Esophagus squamous epithelium (tissue), 5 donors: ENCODE measurements at regions of chr6 and their contacts with region 1.

Region 1: DNA sequence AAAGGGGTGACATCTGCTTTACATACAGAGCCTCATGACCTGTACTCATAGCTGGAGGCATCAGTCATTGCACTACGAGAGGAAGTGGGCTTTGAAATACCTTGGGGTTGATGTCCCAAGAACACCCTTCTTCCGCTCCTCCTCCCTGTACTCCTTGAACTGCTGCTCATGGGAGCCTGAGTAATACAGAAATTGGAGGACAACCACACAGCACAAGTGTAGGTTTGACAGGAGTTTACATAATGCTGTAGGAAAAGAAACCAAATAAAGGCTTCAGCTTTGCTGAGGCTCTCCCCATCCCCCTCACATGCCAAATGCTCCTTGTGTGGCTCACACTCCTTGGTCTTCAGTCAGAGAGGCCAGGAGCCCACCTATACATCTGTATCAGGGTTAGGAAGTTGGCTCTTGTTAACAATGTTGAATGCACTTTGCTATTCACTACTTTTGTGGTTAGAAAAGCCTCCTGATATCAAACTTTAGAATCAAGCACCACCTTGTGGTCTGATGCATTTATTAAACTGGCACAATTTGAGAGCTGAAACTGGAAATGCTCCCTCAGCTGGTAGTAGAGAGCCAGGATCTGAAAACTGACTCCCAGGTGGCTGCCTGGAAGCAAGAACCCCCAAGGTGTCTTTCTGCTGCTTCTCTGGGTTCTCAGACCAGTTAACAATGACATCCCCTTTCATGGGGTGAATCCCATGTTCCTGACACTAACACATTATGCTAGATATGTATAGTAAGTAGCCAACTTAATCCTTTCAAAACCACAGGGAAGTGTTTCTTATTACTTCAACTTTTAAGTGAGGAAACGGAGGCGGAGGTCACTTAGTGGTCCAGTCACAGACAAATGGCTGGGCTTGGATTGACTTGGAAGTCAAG is 56.2 kb upstream of the EDN1 start:
- DNase-seq: no peak
- H3K4me3 ChIP-seq: no peak overlapping the region
- H3K27ac ChIP-seq: no peak overlapping the region
- H3K4me1 ChIP-seq: peaks cover 0 to 22% (median 3%) of the 10 kb centered on the region in 3 donors
- H3K27me3 ChIP-seq: no peaks in the 10 kb centered on the region
- CTCF ChIP-seq: peak; percentile 62 to 90 (median 84)
- POLR2A ChIP-seq: no peak

Region 2: GRCh38 chr6:11585426-11586016 is 648.4 kb before region 1 on chr6:
- intact Hi-C with region 1: loop called (anchors 10 kb)
- DNase-seq: no peak
- H3K4me3 ChIP-seq: no peak overlapping the region
- H3K27ac ChIP-seq: no peak overlapping the region
- H3K4me1 ChIP-seq: peaks cover 0 to 8% (median 6%) of the 10 kb centered on the region in 3 donors
- H3K27me3 ChIP-seq: no peaks in the 10 kb centered on the region
- CTCF ChIP-seq: peak; percentile 29 to 70 (median 56)
- POLR2A ChIP-seq: no peak

Region 3: GRCh38 chr6:11654876-11655275 is 579.1 kb before region 1 on chr6:
- intact Hi-C with region 1: loop called (anchors 5 kb)
- DNase-seq: no peak
- H3K4me3 ChIP-seq: no peak overlapping the region
- H3K27ac ChIP-seq: peak overlapping the region in 1 of 4 donors; percentile 11
- H3K4me1 ChIP-seq: peaks cover 4 to 36% (median 13%) of the 10 kb centered on the region in 3 donors
- H3K27me3 ChIP-seq: no peaks in the 10 kb centered on the region
- CTCF ChIP-seq: no peak
- POLR2A ChIP-seq: no peak

Region 4: GRCh38 chr6:12065321-12066140 is 168.4 kb before region 1 on chr6:
- intact Hi-C with region 1: no loop called
- DNase-seq: no peak
- H3K4me3 ChIP-seq: no peak overlapping the region
- H3K27ac ChIP-seq: no peak overlapping the region
- H3K4me1 ChIP-seq: peaks cover 0 to 27% (median 10%) of the 10 kb centered on the region in 3 donors
- H3K27me3 ChIP-seq: no peaks in the 10 kb centered on the region
- CTCF ChIP-seq: no peak
- POLR2A ChIP-seq: no peak